SK-N-SH (cell line): ENCODE measurements at regions of chr3 and their contacts with region 1.

Region 1: DNA sequence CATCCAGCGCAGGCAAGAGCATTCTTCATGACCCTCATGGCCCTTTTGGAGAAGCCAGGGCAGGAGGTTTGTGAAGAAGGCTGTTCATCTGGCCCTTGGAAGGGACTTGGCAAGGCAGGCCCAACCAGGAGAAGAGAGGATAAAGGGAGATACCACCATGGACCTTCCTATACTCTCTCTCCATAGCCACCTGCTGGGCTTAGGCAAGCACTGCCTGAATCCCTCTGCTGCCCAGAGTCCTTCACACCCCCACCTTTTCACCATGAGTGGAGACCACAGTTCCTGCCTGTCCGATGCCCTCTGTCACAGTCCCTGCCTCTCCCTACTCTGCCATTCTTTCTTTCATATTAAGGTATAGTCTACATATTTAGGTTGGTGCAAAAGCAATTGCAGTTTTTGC is 10.6 kb upstream of the SFMBT1 start:
- DNase-seq: peak; percentile 48
- H3K4me3 ChIP-seq: no peak overlapping the region
- H3K27ac ChIP-seq: no peak overlapping the region
- H3K4me1 ChIP-seq: no peaks in the 10 kb centered on the region
- H3K27me3 ChIP-seq: no peaks in the 10 kb centered on the region
- CTCF ChIP-seq: peak; percentile 43
- EP300 ChIP-seq: no peak
- RAD21 ChIP-seq: peak; percentile 30; the same call in 1 of the 2 replicates

Region 2: GRCh38 chr3:53045518-53046170 is 10.8 kb before region 1 on chr3 and contains the start of gene SFMBT1:
- CTCF ChIA-PET with region 1: interaction called, 11 read pairs
- POLR2A ChIA-PET with region 1: no interaction called
- DNase-seq: peak; percentile 96
- H3K4me3 ChIP-seq: peak within 1 kb of the TSS; percentile 75 to 79
- H3K27ac ChIP-seq: peak within 1 kb of the TSS in 1 of 2 experiments; percentile 70; a peak in 2 of 4 replicates
- H3K4me1 ChIP-seq: peaks cover 0 to 6% of the 10 kb centered on the region in 2 experiments; a peak in 2 of 4 replicates
- H3K27me3 ChIP-seq: no peaks in the 10 kb centered on the region; the same call in 1 of the 2 replicates
- CTCF ChIP-seq: no peak
- EP300 ChIP-seq: no peak
- RAD21 ChIP-seq: no peak
- polyA plus RNA-seq, gene SFMBT1: 0.62 and 0.72 TPM in 2 replicates

Region 3: GRCh38 chr3:53122933-53123305 is 66.5 kb after region 1 on chr3:
- CTCF ChIA-PET with region 1: no interaction called
- POLR2A ChIA-PET with region 1: no interaction called
- DNase-seq: no peak
- H3K4me3 ChIP-seq: no peak overlapping the region
- H3K27ac ChIP-seq: no peak overlapping the region
- H3K4me1 ChIP-seq: peaks cover 0 to 2% of the 10 kb centered on the region in 2 experiments; a peak in 1 of 4 replicates
- H3K27me3 ChIP-seq: no peaks in the 10 kb centered on the region
- CTCF ChIP-seq: no peak
- EP300 ChIP-seq: no peak
- RAD21 ChIP-seq: no peak